WTC11 (cell line): ENCODE measurements at regions of chr5 and their contacts with region 1.

Region 1: GRCh38 chr5:76310208-76310607 is 92.9 kb upstream of the IQGAP2 start:
- DNase-seq: no peak
- ATAC-seq: no peak
- H3K4me3 Mint-ChIP-seq: no peak overlapping the region
- H3K27ac Mint-ChIP-seq: no peak overlapping the region
- H3K4me1 Mint-ChIP-seq: no peaks in the 10 kb centered on the region
- H3K27me3 Mint-ChIP-seq: no peaks in the 10 kb centered on the region; the same call in 1 of the 2 replicates
- CTCF ChIP-seq: no peak

Region 2: GRCh38 chr5:76325876-76326491 is 15.8 kb after region 1 on chr5:
- CTCF ChIA-PET with region 1: interaction called, 25 read pairs
- POLR2A ChIA-PET with region 1: no interaction called
- DNase-seq: no peak
- ATAC-seq: no peak
- H3K4me3 Mint-ChIP-seq: peak overlapping the region; percentile 70
- H3K27ac Mint-ChIP-seq: 0 out of 2 replicates have a peak overlapping the region, but pooled peaks have one; percentile 36
- H3K4me1 Mint-ChIP-seq: peaks cover 40% of the 10 kb centered on the region
- H3K27me3 Mint-ChIP-seq: peaks cover 20% of the 10 kb centered on the region
- CTCF ChIP-seq: no peak